BJ (cell line): ENCODE measurements at regions of chr10 and their contacts with region 1.

Region 1: DNA sequence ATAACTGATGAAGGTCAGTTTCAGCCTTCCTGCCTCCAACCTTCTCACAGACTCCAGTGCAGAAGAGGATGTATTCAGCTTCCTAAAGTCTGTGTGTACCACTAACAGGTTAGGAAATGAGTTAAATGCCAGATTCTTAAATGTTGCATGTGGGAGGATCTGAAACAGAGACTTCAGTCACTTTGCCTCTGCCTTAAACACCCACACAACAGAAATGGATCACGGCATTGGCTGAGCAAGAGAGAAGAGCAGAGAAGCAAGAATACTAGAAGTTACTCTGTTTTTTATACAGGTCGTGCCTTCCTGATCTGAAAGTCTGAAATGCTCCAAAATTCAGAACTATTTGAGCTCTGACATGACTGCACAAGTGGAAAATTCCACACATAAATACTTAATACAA is 98.9 kb upstream of the ARHGAP21 start:
- DNase-seq: no peak
- H3K4me3 ChIP-seq: no peak overlapping the region
- H3K27me3 ChIP-seq: no peaks in the 10 kb centered on the region
- CTCF ChIP-seq: no peak

Region 2: GRCh38 chr10:24865783-24866182 is 43.2 kb after region 1 on chr10:
- CTCF ChIA-PET with region 1: no interaction called
- POLR2A ChIA-PET with region 1: interaction called, 12 read pairs
- DNase-seq: no peak
- H3K4me3 ChIP-seq: no peak overlapping the region
- H3K27me3 ChIP-seq: no peaks in the 10 kb centered on the region
- CTCF ChIP-seq: no peak